ENCODE measurements at regions of chr2 and their contacts with region 1.

Region 1: DNA sequence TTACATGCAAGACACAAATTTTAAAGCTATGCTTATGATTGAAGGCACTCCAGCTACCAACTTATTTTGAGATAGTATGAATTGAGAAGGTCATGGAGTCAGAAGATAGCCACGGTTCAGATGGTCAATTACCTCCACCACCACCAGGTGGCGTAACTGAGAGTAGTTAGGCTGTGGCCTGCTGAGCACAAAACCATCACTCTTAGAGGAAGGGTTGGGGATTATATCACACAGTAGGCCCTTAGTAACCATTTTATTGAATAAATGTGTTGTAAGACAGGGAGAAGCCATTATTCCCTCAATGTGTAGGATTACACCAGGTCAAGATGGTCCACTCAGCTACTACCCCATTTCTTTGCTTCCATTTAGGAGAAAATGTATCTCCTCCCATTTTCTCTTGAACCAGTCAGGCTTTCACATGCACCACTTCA is 18.8 kb downstream of the KLHL41 start:
- DNase-seq: peak; percentile 47
- CTCF ChIP-seq: peak; percentile 82

Region 2: DNA sequence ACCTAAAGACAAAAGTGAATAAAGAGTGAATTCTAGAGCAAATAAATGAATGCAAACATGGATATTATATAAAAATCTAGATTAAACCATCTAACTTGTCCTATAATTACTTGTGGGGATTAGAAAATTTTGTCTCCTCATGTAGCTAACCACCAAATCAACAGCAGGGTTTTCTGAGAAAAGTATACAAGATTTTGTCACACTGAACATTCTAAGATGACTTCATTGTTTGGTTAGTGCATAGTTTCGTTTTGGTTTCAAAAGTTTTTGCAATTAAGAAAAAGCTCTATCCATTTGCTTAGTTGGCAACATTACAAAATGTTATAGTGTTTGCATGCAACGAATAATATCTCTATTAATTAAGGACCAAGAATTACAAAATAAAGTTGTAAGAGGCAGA is 291.0 kb before region 1 on chr2:
- in situ Hi-C with region 1: no loop called
- DNase-seq: no peak
- CTCF ChIP-seq: no peak

Region 3: DNA sequence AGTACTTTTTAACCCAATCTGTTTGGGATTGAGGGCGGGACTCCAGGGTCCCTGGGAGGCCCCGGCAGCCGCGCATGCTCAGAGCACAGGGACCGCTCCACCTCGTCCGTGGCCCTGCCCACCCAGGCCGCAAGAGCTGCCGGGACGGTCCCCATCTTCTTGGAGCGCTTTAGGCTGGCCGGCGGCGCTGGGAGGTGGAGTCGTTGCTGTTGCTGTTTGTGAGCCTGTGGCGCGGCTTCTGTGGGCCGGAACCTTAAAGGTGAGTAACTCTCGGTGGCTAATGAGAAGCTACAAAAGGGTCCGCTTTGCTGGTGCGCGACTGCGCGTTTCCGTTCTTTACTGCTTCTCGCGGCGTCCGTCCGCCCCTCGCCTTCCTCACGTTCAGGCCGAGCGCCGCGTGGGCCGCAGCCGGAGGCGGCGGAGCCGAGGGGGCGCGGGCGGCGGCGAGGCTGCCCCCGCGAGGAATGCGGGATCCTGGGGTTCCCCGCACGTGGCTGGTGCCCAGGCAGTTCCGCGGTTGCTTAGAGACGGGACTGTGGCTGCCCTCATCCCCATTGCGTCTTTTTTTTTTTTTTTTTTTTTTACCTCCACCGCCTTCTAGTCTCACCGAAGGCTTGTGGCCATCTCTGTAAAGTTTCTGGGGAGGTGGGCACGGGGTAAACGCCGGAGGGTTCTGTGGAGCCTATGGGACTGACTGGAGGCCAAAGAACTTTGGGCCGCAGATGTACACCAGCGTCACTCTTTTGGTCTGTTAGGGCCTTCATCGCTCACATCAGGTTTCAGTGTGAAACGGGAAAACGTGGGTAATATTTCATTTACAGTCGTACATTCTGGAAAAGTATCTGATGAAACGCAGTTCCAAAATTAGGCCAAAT is 270.7 kb after region 1 on chr2 and contains the start of gene SSB:
- in situ Hi-C with region 1: loop called (anchors 25 kb)
- DNase-seq: peak; percentile 94
- CTCF ChIP-seq: no peak

Region 4: DNA sequence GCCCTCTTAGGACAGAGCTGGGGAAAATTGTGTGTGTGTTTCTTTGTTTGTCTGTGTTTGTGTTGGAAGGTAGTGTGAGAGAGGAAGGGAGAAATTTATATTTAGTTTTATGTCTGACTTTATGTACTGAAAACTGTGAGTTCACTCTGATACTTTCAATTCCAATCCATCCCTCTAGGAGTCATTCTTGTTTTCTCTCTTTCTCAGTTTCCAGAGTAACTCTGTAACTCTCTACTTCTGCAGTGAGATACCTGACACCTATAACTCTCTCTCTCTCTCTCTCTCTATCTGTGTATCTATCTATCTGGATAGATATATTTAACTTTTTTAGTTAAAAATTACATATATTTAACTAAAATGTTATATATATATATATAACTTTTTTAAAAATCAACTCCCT is 427.7 kb after region 1 on chr2:
- in situ Hi-C with region 1: no loop called
- DNase-seq: no peak
- CTCF ChIP-seq: no peak

Measured in GM13977 (cell line).